HCT116 (cell line): ENCODE measurements at regions of chr2 and their contacts with region 1.

Region 1: GRCh38 chr2:109736177-109736827 is 57.8 kb upstream of the RGPD5 start:
- DNase-seq: peak; percentile 62
- ATAC-seq: peak; percentile 98
- H3K4me3 ChIP-seq: no peak overlapping the region
- H3K27ac ChIP-seq: no peak overlapping the region
- H3K4me1 ChIP-seq: no peaks in the 10 kb centered on the region
- H3K27me3 ChIP-seq: no peaks in the 10 kb centered on the region
- CTCF ChIP-seq: peak; percentile 60 to 85 (median 81)
- POLR2A ChIP-seq: no peak
- RAD21 ChIP-seq: peak; percentile 95

Region 2: DNA sequence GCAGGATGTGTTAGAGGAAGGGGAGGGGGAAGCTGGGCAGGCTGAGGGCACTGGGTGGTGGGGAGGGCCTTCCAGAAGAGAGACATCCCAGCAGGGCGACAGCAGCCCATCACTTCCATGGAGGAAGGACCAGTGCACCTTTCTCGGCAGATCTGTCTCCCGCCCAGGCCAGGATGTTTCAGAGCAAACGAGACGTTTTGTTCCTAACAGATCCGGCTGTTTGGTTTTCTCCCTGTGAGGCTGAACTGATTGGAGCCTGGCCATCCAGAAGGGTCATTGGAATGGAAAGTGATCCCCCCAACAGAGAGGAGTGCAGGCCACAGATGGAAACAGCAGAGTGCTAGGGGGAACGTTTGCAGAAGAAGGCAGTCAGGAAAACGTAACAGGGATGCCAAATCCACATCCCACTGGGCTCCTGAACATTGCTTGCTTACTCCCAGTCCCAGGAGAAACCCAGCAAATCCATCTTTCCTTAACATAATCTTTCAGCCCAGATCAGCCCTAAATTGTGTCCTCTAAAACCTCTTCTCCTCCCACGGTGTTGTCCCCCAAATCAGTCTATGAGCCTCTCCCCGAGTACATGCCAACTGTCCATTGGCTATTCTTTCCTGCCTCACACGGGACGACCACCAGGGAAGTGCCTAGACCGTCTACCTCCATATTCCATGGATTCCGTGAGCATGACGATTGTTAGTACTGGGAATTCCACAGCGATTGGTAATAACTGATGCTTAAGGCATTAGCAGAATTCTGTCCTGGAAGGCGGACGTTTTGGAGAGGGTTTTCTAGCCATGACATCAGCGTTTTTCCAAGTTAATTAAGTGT is 249.4 kb before region 1 on chr2:
- CTCF ChIA-PET with region 1: no interaction called
- POLR2A ChIA-PET with region 1: no interaction called
- RAD21 ChIA-PET with region 1: no interaction called
- intact Hi-C with region 1: no loop called
- DNase-seq: no peak
- ATAC-seq: no peak
- H3K4me3 ChIP-seq: no peak overlapping the region
- H3K27ac ChIP-seq: no peak overlapping the region
- H3K4me1 ChIP-seq: no peaks in the 10 kb centered on the region
- H3K27me3 ChIP-seq: no peaks in the 10 kb centered on the region
- CTCF ChIP-seq: no peak
- POLR2A ChIP-seq: no peak
- RAD21 ChIP-seq: no peak

Region 3: DNA sequence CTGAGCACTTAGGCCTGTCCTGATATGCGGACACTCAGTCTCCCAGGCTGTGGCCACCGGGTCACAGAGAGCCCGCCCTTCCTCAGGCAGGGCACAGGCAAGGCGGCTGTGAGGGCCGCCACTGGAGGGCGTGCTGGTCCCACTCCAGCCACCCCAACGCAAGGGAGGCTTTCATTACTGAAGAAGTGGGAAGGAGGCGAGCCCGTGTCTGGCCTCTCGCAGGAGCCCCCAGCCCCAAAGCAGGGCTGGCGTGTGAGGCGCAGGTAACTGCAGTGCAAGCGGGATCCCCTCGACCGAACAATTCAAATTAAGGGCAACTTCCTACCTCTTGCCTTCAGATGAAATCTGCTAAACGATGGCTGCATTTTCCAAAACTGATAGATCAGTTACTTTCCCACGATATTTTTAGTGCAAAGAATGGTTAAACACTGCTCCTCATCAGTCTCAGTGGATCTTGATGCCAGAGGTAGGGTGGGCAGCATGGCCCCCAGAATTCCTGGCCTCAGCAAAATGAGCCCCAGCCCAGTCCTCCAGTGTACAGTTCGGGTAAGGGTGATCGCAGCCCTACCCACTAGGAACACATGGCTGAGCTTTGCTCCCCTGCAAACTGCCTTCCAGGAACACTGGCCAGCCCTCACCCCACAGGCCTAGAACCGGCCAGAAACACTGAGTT is 219.7 kb before region 1 on chr2:
- CTCF ChIA-PET with region 1: interaction called, 12 read pairs
- POLR2A ChIA-PET with region 1: no interaction called
- RAD21 ChIA-PET with region 1: no interaction called
- intact Hi-C with region 1: loop called (anchors 1 kb)
- DNase-seq: peak; percentile 33
- ATAC-seq: peak; percentile 100
- H3K4me3 ChIP-seq: no peak overlapping the region
- H3K27ac ChIP-seq: no peak overlapping the region
- H3K4me1 ChIP-seq: peaks cover 0 to 5% of the 10 kb centered on the region in 2 experiments; a peak in 1 of 4 replicates
- H3K27me3 ChIP-seq: no peaks in the 10 kb centered on the region
- CTCF ChIP-seq: peak; percentile 91 to 94 (median 93)
- POLR2A ChIP-seq: no peak
- RAD21 ChIP-seq: peak; percentile 98

Region 4: DNA sequence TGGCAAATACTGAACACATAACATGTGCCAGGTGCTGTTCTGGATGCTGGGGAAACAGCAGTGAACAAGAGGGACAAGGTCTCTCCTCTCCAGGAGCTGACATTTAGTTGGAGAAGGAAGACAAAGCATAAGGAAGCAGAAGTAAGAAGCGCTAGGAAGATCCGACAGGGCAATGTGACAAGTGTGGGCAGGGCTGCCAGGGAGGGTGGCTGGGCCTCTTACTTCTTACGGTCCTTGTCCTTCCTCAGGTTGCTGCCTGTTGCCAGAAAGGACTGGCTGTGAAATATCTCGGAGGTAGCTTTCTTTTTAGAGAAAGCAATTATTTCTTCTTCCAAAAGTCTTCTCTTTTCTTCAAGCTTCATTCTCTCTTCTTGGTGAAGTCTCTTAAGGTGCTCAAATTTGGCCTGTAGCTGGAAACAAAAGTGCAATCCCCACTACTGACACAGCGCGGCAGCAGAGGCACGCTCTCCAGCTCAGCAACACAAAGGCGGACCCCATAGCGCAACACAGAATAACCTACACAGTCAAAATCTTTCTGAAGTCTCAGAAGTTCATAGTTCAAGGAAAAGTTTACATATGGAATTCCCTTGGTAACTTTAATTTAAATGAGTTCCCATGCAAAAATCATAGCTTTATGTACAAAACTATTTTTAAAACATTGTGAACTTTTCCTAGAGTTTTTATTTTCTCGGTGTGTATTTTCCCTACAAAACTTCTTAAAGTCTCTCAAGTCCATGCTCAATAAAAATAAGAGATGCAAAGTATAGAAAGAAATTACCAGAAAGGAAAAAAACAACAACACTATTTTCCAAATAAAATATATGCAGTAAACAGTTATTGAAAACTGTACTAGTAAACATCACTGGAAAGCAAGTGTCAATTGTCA is 190.2 kb before region 1 on chr2:
- CTCF ChIA-PET with region 1: interaction called, 23 read pairs
- POLR2A ChIA-PET with region 1: no interaction called
- RAD21 ChIA-PET with region 1: interaction called, 3 to 11 read pairs
- intact Hi-C with region 1: loop called (anchors 1 kb)
- DNase-seq: peak; percentile 28
- ATAC-seq: peak; percentile 95
- H3K4me3 ChIP-seq: no peak overlapping the region
- H3K27ac ChIP-seq: no peak overlapping the region
- H3K4me1 ChIP-seq: peaks cover 0 to 3% of the 10 kb centered on the region in 2 experiments; a peak in 1 of 4 replicates
- H3K27me3 ChIP-seq: no peaks in the 10 kb centered on the region
- CTCF ChIP-seq: peak; percentile 76 to 82 (median 77)
- POLR2A ChIP-seq: no peak
- RAD21 ChIP-seq: peak; percentile 87

Region 5: DNA sequence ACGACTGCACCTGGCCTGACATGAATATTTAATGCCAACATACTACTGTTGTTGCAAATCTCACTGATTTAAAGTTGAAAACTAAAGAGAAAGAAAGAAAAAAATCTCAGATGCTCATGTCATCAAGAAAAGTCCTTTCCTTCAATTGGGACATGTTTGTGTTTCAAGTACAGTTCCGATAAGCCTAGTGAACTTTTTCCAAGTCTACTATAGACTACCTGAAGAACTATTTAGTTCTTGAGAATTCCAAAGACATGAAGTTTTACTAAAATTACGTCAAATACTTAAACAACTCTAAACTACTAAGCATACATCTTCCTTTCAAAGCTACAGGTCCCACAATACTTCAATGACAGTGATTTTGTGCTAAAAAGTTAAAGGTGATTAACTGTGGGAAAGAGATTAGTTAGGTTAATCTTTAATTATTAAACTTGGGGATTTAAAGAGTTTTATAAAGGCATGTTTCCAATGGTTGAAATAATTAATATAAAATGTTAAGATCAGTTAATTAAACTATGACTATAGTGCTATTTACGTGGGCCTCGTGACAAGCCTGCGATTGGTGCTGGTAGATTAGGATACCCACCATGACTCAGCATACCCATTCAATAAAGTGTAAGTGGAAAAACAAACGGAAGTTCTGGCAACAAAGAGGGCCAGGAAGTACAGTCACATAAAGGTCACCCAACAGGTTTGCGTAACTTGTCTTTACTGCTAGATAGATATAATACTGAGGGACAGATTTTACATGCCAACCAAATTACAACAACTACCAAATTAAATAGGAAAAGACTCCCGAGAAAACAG is 178.0 kb before region 1 on chr2:
- CTCF ChIA-PET with region 1: no interaction called
- POLR2A ChIA-PET with region 1: no interaction called
- RAD21 ChIA-PET with region 1: no interaction called
- intact Hi-C with region 1: no loop called
- DNase-seq: peak; percentile 68
- ATAC-seq: peak; percentile 81
- H3K4me3 ChIP-seq: no peak overlapping the region
- H3K27ac ChIP-seq: peak overlapping the region; percentile 23; the same call in 1 of the 2 replicates
- H3K4me1 ChIP-seq: peaks cover 14 to 57% of the 10 kb centered on the region in 2 experiments
- H3K27me3 ChIP-seq: no peaks in the 10 kb centered on the region
- CTCF ChIP-seq: no peak
- POLR2A ChIP-seq: no peak
- RAD21 ChIP-seq: no peak

Region 6: DNA sequence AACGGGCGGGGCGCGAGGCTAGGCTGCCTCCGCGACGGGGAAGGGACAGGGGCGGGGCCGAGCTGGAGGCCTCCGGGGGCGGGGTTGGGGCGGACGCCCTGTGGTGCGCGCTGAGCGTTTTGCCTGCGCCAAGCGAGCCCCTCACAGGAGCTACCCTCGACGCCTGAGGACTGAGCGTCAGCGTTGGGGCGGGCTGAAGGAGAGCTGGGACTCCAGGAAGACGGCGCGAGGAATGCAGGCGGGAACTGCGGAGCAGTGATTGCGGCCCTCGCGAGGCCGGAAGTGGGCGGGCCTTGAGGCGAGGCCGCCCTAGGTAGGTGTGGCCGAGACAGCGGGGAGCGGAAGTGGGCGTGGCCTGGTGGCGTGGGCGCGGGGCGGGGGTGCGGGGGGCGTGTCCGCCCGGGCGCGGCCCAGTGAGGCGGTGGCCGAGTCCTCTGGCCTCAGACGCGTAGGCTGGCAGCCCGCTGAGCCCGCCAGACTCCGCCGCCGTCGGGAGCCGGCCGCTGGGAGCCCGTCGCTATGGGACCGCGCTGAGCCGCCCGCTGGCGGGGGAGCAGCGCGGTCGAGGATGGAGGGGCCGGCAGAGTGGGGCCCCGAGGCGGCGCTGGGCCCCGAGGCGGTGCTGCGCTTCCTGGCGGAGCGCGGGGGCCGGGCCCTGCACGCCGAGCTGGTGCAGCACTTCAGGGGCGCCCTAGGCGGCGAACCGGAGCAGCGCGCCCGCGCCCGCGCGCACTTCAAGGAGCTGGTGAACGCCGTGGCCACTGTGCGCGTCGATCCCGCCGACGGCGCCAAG is 122.2 kb before region 1 on chr2 and contains the starts of genes SEPTIN10 and SOWAHC:
- CTCF ChIA-PET with region 1: interaction called, 7 read pairs
- POLR2A ChIA-PET with region 1: no interaction called
- RAD21 ChIA-PET with region 1: interaction called in 1 of 2 experiments, 3 read pairs
- intact Hi-C with region 1: loop called (anchors 1 kb)
- DNase-seq: peak; percentile 97
- ATAC-seq: peak; percentile 91
- H3K4me3 ChIP-seq: peak within 1 kb of the TSS; percentile 92 to 98
- H3K27ac ChIP-seq: peak within 1 kb of the TSS; percentile 78
- H3K4me1 ChIP-seq: peaks cover 29 to 51% of the 10 kb centered on the region in 2 experiments
- H3K27me3 ChIP-seq: no peaks in the 10 kb centered on the region
- CTCF ChIP-seq: no peak
- POLR2A ChIP-seq: peak; percentile 51
- RAD21 ChIP-seq: no peak
- total RNA-seq, gene SEPTIN10: 113 TPM
- total RNA-seq, gene SOWAHC: 16.6 TPM

Region 7: DNA sequence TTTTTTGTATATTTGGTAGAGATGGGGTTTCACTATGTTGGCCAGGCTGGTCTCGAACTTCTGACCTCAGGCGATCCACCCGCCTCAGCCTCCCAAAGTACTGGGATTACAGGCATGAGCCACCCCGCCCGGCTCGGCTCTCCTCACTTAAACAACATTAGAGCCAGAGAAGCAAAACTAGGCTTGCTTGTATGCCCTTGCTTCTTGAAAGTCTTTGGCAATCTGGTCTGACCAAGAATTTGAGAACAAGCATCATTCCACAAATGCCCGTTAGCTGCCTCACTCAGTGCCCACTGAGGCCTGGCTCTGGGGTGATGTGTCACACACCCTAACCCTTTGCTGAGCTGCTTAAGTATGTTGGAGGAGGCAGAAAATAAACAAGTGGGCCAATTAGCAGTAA is 88.7 kb before region 1 on chr2:
- CTCF ChIA-PET with region 1: no interaction called
- POLR2A ChIA-PET with region 1: no interaction called
- RAD21 ChIA-PET with region 1: no interaction called
- intact Hi-C with region 1: no loop called
- DNase-seq: no peak
- ATAC-seq: peak; percentile 27; the same call in 1 of the 2 replicates
- H3K4me3 ChIP-seq: no peak overlapping the region
- H3K27ac ChIP-seq: no peak overlapping the region
- H3K4me1 ChIP-seq: peaks cover 2 to 18% of the 10 kb centered on the region in 2 experiments; a peak in 3 of 4 replicates
- H3K27me3 ChIP-seq: no peaks in the 10 kb centered on the region
- CTCF ChIP-seq: no peak
- POLR2A ChIP-seq: no peak
- RAD21 ChIP-seq: no peak

Region 8: GRCh38 chr2:109722026-109722425 is 14.3 kb before region 1 on chr2:
- CTCF ChIA-PET with region 1: no interaction called
- POLR2A ChIA-PET with region 1: no interaction called
- RAD21 ChIA-PET with region 1: no interaction called
- intact Hi-C with region 1: no loop called
- DNase-seq: no peak
- ATAC-seq: no peak
- H3K4me3 ChIP-seq: no peak overlapping the region
- H3K27ac ChIP-seq: no peak overlapping the region
- H3K4me1 ChIP-seq: no peaks in the 10 kb centered on the region
- H3K27me3 ChIP-seq: no peaks in the 10 kb centered on the region
- CTCF ChIP-seq: no peak
- POLR2A ChIP-seq: no peak
- RAD21 ChIP-seq: no peak